ENCODE measurements at regions of chr11 and their contacts with region 1.

Region 1: GRCh38 chr11:57432714-57433163 is 5.8 kb upstream of the SLC43A3 start:
- DNase-seq: no peak

Region 2: DNA sequence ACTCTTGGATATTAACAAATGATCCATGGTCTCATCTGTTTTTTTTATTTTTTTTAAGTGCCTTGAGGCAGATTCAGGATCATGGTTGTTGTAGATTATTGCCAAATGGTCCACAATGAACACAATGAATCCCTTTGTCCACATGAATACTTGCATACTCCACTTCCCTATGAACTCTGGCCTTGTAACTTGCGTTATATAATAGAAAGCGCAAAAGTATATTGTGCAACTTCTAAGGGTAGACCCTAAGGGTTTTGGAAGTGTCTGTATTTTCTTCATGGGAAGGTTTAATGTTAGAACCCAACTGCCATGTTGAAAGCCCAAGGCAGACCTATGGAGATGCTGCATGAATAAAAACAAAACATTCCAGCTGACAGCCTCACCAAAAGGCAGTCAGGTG is 1028.3 kb before region 1 on chr11:
- intact Hi-C with region 1: no loop called
- DNase-seq: no peak

Region 3: DNA sequence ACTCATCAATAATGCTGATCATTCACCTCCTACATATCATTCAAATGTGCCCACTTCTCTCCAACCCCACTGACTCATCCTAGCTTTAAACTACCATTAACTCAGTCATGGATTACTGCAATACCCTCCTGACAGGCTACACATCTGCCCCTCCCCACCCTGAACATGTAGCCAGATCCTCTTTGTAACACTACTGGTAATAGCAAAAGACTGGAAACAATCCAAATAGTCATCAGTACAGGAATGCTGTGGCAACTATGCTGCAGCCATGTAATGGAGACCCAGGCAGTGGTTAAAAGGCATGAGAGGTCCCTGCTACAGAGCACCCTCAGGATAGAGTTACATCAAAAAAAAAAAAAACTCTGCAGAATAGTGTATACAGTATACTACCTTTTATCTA is 22.5 kb before region 1 on chr11:
- intact Hi-C with region 1: loop called in 1 of 2 experiments (anchors 1 kb)
- DNase-seq: no peak

Region 4: GRCh38 chr11:57562596-57562995 is 129.9 kb after region 1 on chr11:
- intact Hi-C with region 1: loop called in 1 of 2 experiments (anchors 1 kb)
- DNase-seq: no peak

Measured in posterior vena cava (tissue), 2 donors.